ENCODE measurements at regions of chr9 and their contacts with region 1.

Region 1: DNA sequence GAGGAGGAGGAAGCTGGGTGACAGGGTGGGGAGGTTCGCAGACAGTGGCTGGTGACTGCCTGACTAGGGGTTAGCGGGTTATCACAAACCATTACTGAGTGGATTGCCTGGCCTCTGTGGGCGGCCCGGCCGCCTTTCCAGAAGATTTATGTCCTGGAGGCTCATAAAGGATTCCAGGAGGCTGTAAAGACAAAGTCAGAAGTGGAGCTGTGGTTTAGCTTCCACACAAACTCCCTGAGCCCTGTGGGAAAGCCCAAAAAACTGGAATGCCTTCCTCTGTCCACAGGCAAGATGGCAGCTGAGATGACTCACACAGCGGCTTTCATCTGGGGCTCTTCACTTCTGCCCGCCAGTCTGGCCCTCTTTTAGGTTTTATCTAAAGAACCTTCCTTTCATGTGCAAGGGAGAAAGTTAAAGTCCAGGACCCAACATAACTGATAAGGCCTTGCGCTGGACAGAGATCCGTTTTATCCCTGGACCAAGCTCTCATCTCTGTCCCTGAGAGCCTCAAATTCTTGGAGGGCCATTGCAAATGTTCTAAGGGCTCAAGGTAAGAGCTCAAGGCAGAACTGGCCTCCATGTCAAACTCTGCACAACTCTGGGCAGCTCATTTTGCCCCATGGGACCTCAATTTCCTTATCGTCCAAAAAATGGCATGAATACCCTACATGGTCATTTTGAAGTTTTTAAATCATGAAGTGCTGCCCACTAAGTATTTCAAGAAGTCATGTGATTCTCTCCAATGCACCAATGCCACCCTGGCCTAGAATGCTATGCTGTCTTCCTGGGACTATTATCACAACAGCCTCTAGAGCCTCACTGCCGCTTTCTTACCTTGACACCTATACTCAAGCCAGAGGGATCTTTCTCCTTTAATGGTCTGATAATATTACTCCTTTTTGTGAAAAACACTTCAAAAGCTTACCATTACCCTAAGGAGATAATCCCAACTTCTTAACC is 249.4 kb upstream of the TRIM32 start:
- DNase-seq: no peak
- ATAC-seq: no peak

Region 2: DNA sequence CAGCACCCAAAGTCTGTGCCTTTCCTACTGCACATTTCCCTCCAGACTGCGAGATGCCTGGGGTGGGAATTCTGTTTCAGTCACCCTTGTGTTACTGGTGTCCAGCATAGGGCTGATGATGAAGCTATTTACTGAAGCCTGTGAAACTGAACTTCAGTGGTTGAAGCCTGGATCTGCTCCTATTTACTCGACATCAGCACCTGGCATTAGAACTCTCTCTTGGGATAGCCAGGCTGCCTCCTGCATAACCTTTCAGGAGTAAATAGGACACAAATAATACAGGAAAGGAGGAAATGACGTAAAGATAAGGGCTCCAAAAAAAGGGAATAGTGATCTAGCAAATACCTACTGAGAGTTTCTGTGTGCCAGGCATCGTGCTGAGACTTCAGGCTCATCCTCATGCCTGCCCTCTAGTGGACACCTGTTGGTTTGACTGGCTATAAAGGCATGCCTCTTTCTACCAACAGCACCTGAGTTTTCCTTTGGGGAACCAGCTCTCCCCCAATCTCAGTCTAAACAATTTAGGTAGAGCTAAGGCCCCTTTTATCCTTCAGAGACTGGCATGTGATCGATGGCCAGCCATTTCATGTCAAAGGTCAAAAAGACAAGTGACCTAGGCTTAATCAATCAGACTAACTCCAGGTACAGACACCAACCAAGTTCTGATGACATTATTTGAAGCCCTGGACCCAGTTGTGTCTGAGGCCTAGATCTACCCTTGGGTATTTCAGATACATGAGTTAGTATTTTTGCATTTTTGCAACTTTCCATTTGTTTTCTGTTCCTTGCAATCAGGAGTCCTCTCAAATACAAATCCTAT is 57.3 kb after region 1 on chr9:
- intact Hi-C with region 1: loop called (anchors 10 kb)
- DNase-seq: no peak
- ATAC-seq: no peak